Transverse colon (tissue), 4 donors: ENCODE measurements at regions of chr19 and their contacts with region 1.

Region 1: DNA sequence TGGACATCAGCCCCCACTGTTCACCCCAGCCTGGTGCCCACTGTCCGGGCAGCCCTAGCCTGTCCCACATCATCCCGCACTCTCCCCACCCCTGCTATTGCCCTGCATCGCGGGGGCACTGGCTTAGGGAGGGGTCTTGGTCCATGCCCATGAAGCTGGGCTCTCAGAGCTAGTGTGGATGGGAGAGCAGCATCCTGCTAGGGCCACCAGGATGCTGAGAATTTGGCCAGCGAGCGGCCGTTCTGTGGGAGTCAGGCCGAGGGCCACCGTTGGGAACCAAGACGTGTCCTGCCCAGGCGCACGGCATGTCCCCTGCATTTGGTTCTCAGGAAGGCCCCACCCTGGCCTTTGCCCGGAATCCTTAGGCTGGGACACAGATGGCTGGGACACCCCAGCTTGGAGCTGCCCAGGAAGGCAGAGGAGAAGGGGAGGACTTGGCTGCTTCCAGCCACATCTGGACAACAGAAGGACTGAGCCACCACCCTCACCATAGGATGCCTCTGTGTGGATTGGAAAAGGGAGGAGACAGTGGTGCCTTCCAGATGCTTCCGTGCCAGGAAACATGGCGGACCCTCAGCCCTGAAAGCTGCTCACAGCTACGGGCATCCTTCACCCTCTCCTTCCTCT is 14.6 kb downstream of the ADGRE5 start:
- DNase-seq: no peak
- H3K4me3 ChIP-seq: no peak overlapping the region
- H3K27ac ChIP-seq: no peak overlapping the region
- H3K4me1 ChIP-seq: no peaks in the 10 kb centered on the region
- H3K27me3 ChIP-seq: no peaks in the 10 kb centered on the region
- CTCF ChIP-seq: no peak
- EP300 ChIP-seq: no peak
- POLR2A ChIP-seq: no peak

Region 2: GRCh38 chr19:14081325-14082093 is 314.3 kb before region 1 on chr19:
- in situ Hi-C with region 1: no loop called
- intact Hi-C with region 1: no loop called
- DNase-seq: peak; percentile 99
- H3K4me3 ChIP-seq: peak overlapping the region; percentile 58 to 77 (median 69)
- H3K27ac ChIP-seq: peak overlapping the region; percentile 88 to 95 (median 94)
- H3K4me1 ChIP-seq: peaks cover 10 to 42% (median 20%) of the 10 kb centered on the region in 4 donors
- H3K27me3 ChIP-seq: no peaks in the 10 kb centered on the region
- CTCF ChIP-seq: no peak
- EP300 ChIP-seq: no peak
- POLR2A ChIP-seq: peak; percentile 75

Region 3: DNA sequence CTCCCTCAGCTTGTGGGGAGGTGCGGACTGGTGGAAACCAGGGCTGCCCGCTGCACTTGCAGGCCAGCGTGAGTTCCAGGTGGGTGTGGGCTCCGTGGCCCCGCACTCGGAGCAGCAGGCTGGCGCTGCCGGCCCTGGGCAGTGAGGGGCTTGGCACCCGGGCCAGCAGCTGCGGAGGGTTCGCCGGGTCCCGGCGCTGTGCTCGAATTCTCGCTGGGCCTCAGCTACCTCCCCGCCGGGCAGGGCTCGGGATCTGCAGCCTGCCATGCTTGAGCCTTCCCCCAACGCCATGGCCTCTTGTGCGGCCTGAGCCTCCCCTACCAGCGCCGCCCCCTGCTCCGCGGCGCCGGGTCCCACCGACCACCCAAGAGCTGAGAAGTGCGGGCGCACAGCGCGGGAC is 118.2 kb before region 1 on chr19:
- in situ Hi-C with region 1: no loop called
- intact Hi-C with region 1: no loop called
- DNase-seq: no peak
- H3K4me3 ChIP-seq: no peak overlapping the region
- H3K27ac ChIP-seq: no peak overlapping the region
- H3K4me1 ChIP-seq: no peaks in the 10 kb centered on the region
- H3K27me3 ChIP-seq: peaks cover 10% of the 10 kb centered on the region
- CTCF ChIP-seq: no peak
- EP300 ChIP-seq: no peak
- POLR2A ChIP-seq: no peak

Region 4: GRCh38 chr19:14769201-14769600 is 373.4 kb after region 1 on chr19:
- in situ Hi-C with region 1: loop called in 2 of 4 experiments (anchors 5 to 10 kb)
- intact Hi-C with region 1: no loop called
- DNase-seq: no peak
- H3K4me3 ChIP-seq: no peak overlapping the region
- H3K27ac ChIP-seq: no peak overlapping the region
- H3K4me1 ChIP-seq: no peaks in the 10 kb centered on the region
- H3K27me3 ChIP-seq: no peaks in the 10 kb centered on the region
- CTCF ChIP-seq: no peak
- EP300 ChIP-seq: no peak
- POLR2A ChIP-seq: no peak